ENCODE measurements at regions of chr11 and their contacts with region 1.

Region 1: GRCh38 chr11:95231127-95231880 is at the start of gene SESN3:
- DNase-seq: peak; percentile 96
- ATAC-seq: peak; percentile 85
- H3K4me3 Mint-ChIP-seq: no peak within 1 kb of the TSS
- H3K27ac Mint-ChIP-seq: peak within 1 kb of the TSS; percentile 92
- H3K4me1 Mint-ChIP-seq: peaks cover 58% of the 10 kb centered on the region
- H3K27me3 Mint-ChIP-seq: no peaks in the 10 kb centered on the region
- CTCF ChIP-seq: no peak
- total RNA-seq, gene SESN3: 82.3 and 87.2 TPM in 2 replicates

Region 2: DNA sequence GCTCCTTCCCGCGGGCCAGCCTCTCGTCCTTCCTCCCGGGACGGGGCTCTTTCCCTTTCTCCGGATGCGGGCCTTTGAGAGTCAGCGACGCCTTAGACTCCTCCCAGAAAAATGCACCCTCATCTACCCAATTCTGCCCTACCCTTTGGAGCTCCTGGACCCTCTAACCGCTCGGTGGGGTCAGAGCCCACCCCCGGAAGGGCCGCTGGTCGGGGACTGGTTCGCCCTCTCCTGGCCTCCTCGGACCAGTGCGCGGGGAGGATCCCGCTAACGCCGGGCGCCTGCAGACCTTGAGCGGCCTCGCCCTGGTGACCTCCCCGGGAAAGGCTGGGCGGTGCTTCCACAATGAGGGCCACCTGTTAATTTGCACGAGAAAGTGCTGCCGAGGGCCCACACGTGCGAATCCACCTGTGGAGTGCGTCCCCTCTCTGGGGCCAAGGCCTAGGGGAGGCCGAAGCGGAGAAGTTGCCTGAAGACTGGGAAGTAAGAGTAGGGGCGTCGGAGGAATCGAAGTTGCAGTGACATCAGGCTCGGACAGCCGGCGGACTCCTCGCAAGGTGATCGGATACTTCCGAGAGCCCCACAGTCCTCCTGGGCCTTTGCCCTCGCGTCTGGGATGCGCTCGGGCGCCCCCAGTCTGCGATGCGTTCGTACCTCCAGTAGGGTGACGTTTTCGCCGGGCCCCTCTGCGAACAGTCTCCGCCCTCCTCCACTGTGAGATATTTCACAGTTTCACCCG is 80.2 kb before region 1 on chr11:
- CTCF ChIA-PET with region 1: interaction called, 6 read pairs
- POLR2A ChIA-PET with region 1: interaction called, 83 read pairs
- intact Hi-C with region 1: loop called (anchors 1 kb)
- DNase-seq: peak; percentile 78
- ATAC-seq: peak; percentile 90
- H3K4me3 Mint-ChIP-seq: peak overlapping the region; percentile 89
- H3K27ac Mint-ChIP-seq: peak overlapping the region; percentile 93
- H3K4me1 Mint-ChIP-seq: peaks cover 38% of the 10 kb centered on the region
- H3K27me3 Mint-ChIP-seq: no peaks in the 10 kb centered on the region
- CTCF ChIP-seq: no peak

Region 3: DNA sequence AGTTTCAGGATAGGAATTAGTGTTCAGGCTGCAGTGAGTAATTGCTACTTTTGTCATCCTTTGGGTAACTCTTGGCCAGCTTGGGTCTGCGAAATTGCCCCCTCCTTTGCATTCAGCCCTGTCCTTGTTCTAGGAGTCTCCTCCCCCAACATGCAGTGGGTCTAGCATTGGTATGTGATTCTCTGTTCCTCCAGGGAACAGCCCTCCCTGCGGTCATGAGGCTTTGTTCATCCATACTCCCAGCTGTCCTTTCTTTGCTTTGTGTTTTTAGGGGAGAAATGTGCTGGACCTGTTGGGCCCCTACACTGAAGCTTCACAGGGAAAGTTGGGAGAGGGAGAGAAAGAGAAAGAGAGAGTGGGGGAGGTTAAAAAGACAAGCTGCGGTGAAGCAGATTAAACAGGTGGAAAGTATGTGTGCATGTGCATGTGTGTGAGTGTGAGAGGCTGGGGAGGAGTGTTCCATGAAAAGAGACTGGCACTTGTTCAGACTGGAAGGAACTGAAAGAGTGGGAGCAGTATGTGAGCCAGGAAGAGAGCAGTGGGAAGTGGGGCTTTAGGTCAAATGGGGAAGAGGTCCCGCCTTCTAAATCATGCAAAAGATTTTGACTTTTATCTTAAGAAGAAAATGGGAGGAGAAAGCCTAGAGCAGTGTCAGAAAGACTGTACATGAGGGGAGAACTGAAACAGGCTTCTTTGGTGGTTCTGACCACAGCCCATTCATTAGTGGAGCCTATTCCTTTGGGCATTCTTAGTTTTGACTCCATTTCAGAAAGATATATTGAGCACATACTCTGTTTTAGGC is 17.6 kb after region 1 on chr11:
- CTCF ChIA-PET with region 1: interaction called, 22 read pairs
- POLR2A ChIA-PET with region 1: interaction called, 357 read pairs
- intact Hi-C with region 1: loop called (anchors 1 kb)
- DNase-seq: no peak
- ATAC-seq: peak; percentile 86
- H3K4me3 Mint-ChIP-seq: peak overlapping the region; percentile 73
- H3K27ac Mint-ChIP-seq: peak overlapping the region; percentile 95
- H3K4me1 Mint-ChIP-seq: peaks cover 59% of the 10 kb centered on the region
- H3K27me3 Mint-ChIP-seq: no peaks in the 10 kb centered on the region
- CTCF ChIP-seq: no peak

Region 4: GRCh38 chr11:95305705-95306104 is 74.4 kb after region 1 on chr11:
- CTCF ChIA-PET with region 1: interaction called, 3 read pairs
- POLR2A ChIA-PET with region 1: interaction called, 14 read pairs
- intact Hi-C with region 1: no loop called
- DNase-seq: no peak
- ATAC-seq: no peak
- H3K4me3 Mint-ChIP-seq: no peak overlapping the region
- H3K27ac Mint-ChIP-seq: no peak overlapping the region
- H3K4me1 Mint-ChIP-seq: peaks cover 31% of the 10 kb centered on the region
- H3K27me3 Mint-ChIP-seq: no peaks in the 10 kb centered on the region
- CTCF ChIP-seq: no peak

Region 5: DNA sequence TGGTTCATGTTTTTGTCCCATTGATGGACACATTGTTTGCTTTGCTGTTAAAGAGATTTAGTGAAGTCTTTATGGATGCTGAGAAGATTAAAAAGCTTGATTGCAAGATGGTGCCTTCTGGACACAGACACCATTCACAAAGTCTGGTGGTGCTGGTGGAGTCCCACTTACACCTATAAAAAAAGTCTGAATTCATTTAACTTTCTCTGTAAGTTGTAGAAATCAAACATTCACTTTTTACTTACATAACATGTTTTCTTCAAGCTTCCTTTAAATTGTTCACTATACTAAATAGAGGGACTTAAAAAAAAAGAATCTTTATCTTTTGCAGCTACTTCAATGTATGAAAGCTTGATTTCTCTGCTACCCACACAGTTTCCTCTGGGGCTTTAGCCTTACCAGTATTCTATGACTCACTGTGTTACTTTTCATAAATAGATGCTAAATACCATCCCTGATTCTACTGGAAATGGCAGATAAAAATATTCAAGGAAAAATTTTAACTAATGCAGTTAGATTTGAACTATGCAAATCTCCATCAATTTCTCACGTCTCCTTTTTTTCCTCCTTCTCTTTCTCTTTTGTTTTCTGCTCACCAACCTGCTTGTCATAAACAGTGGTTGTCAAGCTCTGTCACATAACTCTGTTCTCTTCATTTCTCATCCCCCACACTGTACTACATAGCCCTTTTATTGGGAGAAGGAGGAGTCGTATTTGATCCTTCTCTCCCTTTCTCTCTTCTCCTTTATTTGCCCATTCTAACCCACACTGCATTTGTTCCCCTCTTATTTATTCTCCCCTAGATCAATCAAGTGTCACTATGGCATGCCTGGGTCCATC is 468.5 kb after region 1 on chr11:
- CTCF ChIA-PET with region 1: interaction called, 57 read pairs
- POLR2A ChIA-PET with region 1: interaction called, 90 read pairs
- intact Hi-C with region 1: loop called (anchors 1 kb)
- DNase-seq: no peak
- ATAC-seq: peak; percentile 65
- H3K4me3 Mint-ChIP-seq: peak overlapping the region; percentile 66
- H3K27ac Mint-ChIP-seq: peak overlapping the region; percentile 98
- H3K4me1 Mint-ChIP-seq: peaks cover 52% of the 10 kb centered on the region
- H3K27me3 Mint-ChIP-seq: no peaks in the 10 kb centered on the region
- CTCF ChIP-seq: no peak

Region 6: GRCh38 chr11:95790123-95790932 is 559.0 kb after region 1 on chr11 and contains the start of gene CEP57:
- CTCF ChIA-PET with region 1: no interaction called
- POLR2A ChIA-PET with region 1: interaction called, 32 read pairs
- intact Hi-C with region 1: loop called (anchors 1 kb)
- DNase-seq: peak; percentile 84
- ATAC-seq: peak; percentile 64
- H3K4me3 Mint-ChIP-seq: peak within 1 kb of the TSS; percentile 100
- H3K27ac Mint-ChIP-seq: peak within 1 kb of the TSS; percentile 100
- H3K4me1 Mint-ChIP-seq: peaks cover 47% of the 10 kb centered on the region
- H3K27me3 Mint-ChIP-seq: no peaks in the 10 kb centered on the region
- CTCF ChIP-seq: no peak
- total RNA-seq, gene CEP57: 52.6 and 53.7 TPM in 2 replicates